SK-N-SH (cell line): ENCODE measurements at regions of chr18 and their contacts with region 1.

Region 1: GRCh38 chr18:59631583-59632181 is 65.5 kb downstream of the CCBE1 start:
- DNase-seq: peak; percentile 35
- H3K4me3 ChIP-seq: no peak overlapping the region
- H3K27ac ChIP-seq: no peak overlapping the region
- H3K4me1 ChIP-seq: peaks cover 0 to 4% of the 10 kb centered on the region in 2 experiments; a peak in 2 of 4 replicates
- H3K27me3 ChIP-seq: no peaks in the 10 kb centered on the region
- CTCF ChIP-seq: peak; percentile 90
- EP300 ChIP-seq: no peak
- RAD21 ChIP-seq: peak; percentile 83

Region 2: GRCh38 chr18:59470561-59471121 is 161.0 kb before region 1 on chr18:
- CTCF ChIA-PET with region 1: interaction called, 16 read pairs
- POLR2A ChIA-PET with region 1: no interaction called
- DNase-seq: no peak
- H3K4me3 ChIP-seq: no peak overlapping the region
- H3K27ac ChIP-seq: peak overlapping the region in 1 of 2 experiments; percentile 9; a peak in 1 of 4 replicates
- H3K4me1 ChIP-seq: peaks cover 0 to 12% of the 10 kb centered on the region in 2 experiments; a peak in 1 of 4 replicates
- H3K27me3 ChIP-seq: no peaks in the 10 kb centered on the region
- CTCF ChIP-seq: no peak
- EP300 ChIP-seq: peak in 1 of 2 experiments; percentile 20; a peak in 1 of 4 replicates
- RAD21 ChIP-seq: no peak

Region 3: DNA sequence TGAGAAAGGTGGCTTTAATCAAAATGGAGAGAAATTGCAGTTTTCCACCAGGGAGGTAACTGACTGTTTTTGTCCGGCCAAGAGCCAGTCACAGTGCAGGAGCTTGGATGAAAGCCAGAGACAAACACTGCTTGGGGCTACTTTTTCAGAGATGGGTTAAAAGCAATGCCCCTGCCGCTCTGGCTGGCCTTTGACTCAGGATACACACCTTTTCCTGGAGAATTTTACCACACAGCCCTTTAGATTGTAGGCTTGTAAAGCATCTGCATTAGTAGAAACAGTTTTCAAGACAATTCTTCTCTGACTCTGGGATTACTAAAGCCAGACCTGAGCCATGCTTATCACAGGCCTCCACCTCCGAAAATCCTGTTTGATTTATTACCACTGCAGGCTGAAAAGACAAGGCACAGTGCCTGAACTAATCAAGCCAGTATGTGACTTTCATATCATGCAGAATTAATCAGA is 14.2 kb before region 1 on chr18:
- CTCF ChIA-PET with region 1: interaction called, 12 read pairs
- POLR2A ChIA-PET with region 1: no interaction called
- DNase-seq: peak; percentile 71
- H3K4me3 ChIP-seq: no peak overlapping the region
- H3K27ac ChIP-seq: peak overlapping the region in 1 of 2 experiments; percentile 94; a peak in 2 of 4 replicates
- H3K4me1 ChIP-seq: peaks cover 0 to 22% of the 10 kb centered on the region in 2 experiments; a peak in 2 of 4 replicates
- H3K27me3 ChIP-seq: no peaks in the 10 kb centered on the region
- CTCF ChIP-seq: no peak
- EP300 ChIP-seq: peak; percentile 4 to 61; a peak in 3 of 4 replicates
- RAD21 ChIP-seq: peak; percentile 45; the same call in 1 of the 2 replicates